ENCODE measurements at regions of chr11 and their contacts with region 1.

Region 1: GRCh38 chr11:119044708-119045107 is 12.3 kb downstream of the HYOU1 start:
- DNase-seq: no peak
- H3K4me3 ChIP-seq: no peak overlapping the region
- H3K27ac ChIP-seq: no peak overlapping the region
- H3K4me1 ChIP-seq: no peaks in the 10 kb centered on the region
- H3K27me3 ChIP-seq: no peaks in the 10 kb centered on the region
- CTCF ChIP-seq: no peak

Region 2: GRCh38 chr11:118672846-118673245 is 371.9 kb before region 1 on chr11:
- intact Hi-C with region 1: loop called (anchors 5 kb)
- DNase-seq: peak in 1 of 2 donors; percentile 1
- H3K4me3 ChIP-seq: no peak overlapping the region
- H3K27ac ChIP-seq: no peak overlapping the region
- H3K4me1 ChIP-seq: no peaks in the 10 kb centered on the region
- H3K27me3 ChIP-seq: no peaks in the 10 kb centered on the region
- CTCF ChIP-seq: no peak

Region 3: DNA sequence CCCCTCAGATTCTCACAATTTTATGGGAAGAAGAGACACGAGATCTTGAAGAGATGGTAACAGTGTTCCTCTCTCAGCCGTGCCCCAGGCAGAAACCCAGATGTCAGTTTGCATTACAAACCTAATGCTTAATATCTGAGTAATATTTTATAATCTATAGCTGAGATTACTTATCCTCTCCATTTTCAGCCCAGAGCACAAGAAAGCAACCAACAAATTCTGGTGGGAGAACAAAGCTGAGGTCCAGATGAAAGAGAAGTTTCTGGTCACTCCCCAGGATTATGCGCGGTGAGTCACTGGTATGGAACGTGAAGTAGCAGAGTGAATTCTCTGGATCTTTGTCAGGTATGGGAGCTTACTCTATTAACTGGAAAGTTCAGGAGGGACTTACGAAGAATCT is 45.9 kb before region 1 on chr11:
- intact Hi-C with region 1: loop called (anchors 2 kb)
- DNase-seq: no peak
- H3K4me3 ChIP-seq: peak overlapping the region; percentile 75 to 76
- H3K27ac ChIP-seq: peak overlapping the region; percentile 83 to 87
- H3K4me1 ChIP-seq: peaks cover 0 to 36% (median 26%) of the 10 kb centered on the region in 4 donors
- H3K27me3 ChIP-seq: no peaks in the 10 kb centered on the region
- CTCF ChIP-seq: no peak

Measured in tibial artery (tissue), 4 donors.